ENCODE measurements at regions of chr17 and their contacts with region 1.

Region 1: DNA sequence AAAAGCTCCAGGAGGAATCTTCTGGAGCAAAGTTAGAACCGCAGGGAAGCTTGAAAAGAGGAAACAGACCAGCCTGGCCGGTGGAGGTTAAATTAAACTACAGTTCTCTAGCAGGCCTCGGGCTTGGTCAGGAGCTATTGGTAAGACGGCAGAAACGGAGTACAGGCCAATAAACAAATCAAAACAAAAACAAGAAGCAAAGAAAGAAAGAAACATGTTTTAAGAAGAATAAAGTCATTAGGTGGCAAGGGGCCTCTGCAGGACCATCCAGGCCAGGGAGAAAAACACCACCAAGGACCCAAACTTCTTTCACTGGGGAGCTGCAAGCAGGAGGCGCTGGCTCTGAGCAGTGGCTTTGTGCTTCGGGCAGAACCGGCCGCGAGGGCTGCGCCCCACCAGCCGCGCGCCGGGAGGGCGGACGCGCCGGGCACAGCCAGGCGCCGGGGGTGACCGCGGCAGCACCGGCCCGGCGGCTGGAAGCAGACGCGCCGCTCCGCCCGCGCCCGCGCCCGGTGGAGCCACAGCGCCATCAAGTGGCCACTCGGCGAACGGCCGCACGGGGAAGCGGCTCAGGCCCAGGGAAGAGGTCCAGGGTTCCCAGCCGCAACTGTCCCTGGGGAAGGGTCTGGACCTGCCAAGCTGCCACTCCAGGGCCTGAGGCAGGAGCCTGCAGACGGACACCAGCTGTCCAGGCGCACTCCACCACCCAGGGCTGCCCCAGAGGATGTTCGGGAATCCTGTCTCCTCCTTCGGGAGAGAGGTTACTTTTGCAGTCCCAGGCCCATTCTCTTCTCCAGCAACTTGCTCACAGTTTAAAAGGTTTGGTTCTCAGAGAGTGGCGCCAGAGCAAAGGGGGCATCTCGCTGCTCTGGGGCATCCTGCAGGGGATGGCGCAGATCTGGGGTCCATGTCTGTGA is 419.4 kb downstream of the SOX9 start:
- DNase-seq: peak; percentile 59
- H3K4me3 Mint-ChIP-seq: peak overlapping the region; percentile 66
- H3K27ac Mint-ChIP-seq: no peak overlapping the region
- H3K4me1 Mint-ChIP-seq: peaks cover 25% of the 10 kb centered on the region
- H3K27me3 Mint-ChIP-seq: no peaks in the 10 kb centered on the region
- CTCF ChIP-seq: peak; percentile 96

Region 2: DNA sequence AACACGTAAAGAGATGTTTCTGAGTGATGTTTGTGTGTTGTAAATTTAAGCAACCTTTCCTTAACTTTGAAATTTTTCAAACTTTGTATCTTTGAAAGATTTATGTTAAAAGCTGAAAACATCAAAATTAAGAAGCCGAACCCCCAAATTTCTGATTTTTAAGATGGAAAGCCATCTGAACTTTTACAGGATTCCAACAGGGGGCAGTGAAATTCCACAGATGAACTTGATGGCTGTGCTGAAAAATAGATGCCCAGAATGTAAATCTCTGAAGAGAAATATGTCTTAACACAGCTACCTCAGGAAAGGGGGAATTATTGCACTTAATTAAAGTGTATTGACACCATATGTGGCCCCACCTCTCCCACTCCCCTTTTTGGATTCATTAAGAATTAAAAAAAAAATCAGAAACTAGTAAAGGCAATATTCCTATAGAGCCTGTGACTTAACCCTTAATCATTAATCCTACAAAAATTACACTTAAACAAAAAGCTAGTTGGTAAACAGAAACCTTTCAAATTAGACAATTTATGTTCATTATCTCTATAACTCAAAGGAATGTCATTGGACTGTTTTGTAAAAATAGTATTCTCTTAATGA is 1773.0 kb before region 1 on chr17:
- CTCF ChIA-PET with region 1: interaction called, 3 read pairs
- POLR2A ChIA-PET with region 1: interaction called, 3 read pairs
- intact Hi-C with region 1: loop called (anchors 1 kb)
- DNase-seq: peak; percentile 48
- H3K4me3 Mint-ChIP-seq: no peak overlapping the region
- H3K27ac Mint-ChIP-seq: no peak overlapping the region
- H3K4me1 Mint-ChIP-seq: no peaks in the 10 kb centered on the region
- H3K27me3 Mint-ChIP-seq: peaks cover 9% of the 10 kb centered on the region
- CTCF ChIP-seq: peak; percentile 83

Region 3: DNA sequence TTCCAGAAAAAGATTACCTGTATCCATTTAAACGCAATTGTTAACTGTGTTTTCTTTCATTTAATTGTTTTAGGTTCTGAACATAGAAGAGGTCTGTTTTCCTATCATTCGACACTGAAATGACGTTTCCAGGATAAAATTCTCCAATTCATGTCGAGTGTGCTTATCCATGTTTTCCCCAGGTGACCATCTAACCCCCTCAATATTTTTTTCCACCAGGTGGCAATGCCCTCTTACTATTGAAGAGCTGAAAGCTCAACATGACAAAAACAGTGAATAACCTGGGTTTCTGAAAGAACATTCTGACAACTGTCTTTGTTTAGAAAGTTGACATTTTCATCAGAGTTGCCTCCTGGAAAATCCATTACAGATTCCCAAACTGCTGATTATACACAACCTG is 1422.2 kb before region 1 on chr17:
- CTCF ChIA-PET with region 1: interaction called, 3 read pairs
- POLR2A ChIA-PET with region 1: interaction called, 3 read pairs
- intact Hi-C with region 1: loop called (anchors 1 kb)
- DNase-seq: peak; percentile 57
- H3K4me3 Mint-ChIP-seq: no peak overlapping the region
- H3K27ac Mint-ChIP-seq: peak overlapping the region; percentile 5
- H3K4me1 Mint-ChIP-seq: peaks cover 9% of the 10 kb centered on the region
- H3K27me3 Mint-ChIP-seq: no peaks in the 10 kb centered on the region
- CTCF ChIP-seq: peak; percentile 49

Region 4: GRCh38 chr17:71472809-71473789 is 1067.1 kb before region 1 on chr17:
- CTCF ChIA-PET with region 1: interaction called, 10 read pairs
- POLR2A ChIA-PET with region 1: interaction called, 3 read pairs
- intact Hi-C with region 1: loop called (anchors 1 kb)
- DNase-seq: peak; percentile 73
- H3K4me3 Mint-ChIP-seq: no peak overlapping the region
- H3K27ac Mint-ChIP-seq: no peak overlapping the region
- H3K4me1 Mint-ChIP-seq: peaks cover 5% of the 10 kb centered on the region
- H3K27me3 Mint-ChIP-seq: no peaks in the 10 kb centered on the region
- CTCF ChIP-seq: peak; percentile 63

Region 5: GRCh38 chr17:72529386-72529785 is 10.9 kb before region 1 on chr17:
- CTCF ChIA-PET with region 1: interaction called, 16 read pairs
- POLR2A ChIA-PET with region 1: interaction called, 3 read pairs
- intact Hi-C with region 1: no loop called
- DNase-seq: no peak
- H3K4me3 Mint-ChIP-seq: no peak overlapping the region
- H3K27ac Mint-ChIP-seq: no peak overlapping the region
- H3K4me1 Mint-ChIP-seq: peaks cover 43% of the 10 kb centered on the region
- H3K27me3 Mint-ChIP-seq: no peaks in the 10 kb centered on the region
- CTCF ChIP-seq: no peak

Measured in MCF 10A (cell line).